Panc1 (cell line): ENCODE measurements at regions of chr2 and their contacts with region 1.

Region 1: GRCh38 chr2:9191041-9191481 is 15.6 kb upstream of the ASAP2 start:
- DNase-seq: no peak
- ATAC-seq: peak; percentile 87
- H3K4me3 ChIP-seq: no peak overlapping the region
- H3K27ac ChIP-seq: peak overlapping the region; percentile 51; the same call in 1 of the 2 replicates
- H3K4me1 ChIP-seq: peaks cover 10% of the 10 kb centered on the region; the same call in 1 of the 2 replicates
- H3K27me3 ChIP-seq: no peaks in the 10 kb centered on the region
- CTCF ChIP-seq: no peak

Region 2: DNA sequence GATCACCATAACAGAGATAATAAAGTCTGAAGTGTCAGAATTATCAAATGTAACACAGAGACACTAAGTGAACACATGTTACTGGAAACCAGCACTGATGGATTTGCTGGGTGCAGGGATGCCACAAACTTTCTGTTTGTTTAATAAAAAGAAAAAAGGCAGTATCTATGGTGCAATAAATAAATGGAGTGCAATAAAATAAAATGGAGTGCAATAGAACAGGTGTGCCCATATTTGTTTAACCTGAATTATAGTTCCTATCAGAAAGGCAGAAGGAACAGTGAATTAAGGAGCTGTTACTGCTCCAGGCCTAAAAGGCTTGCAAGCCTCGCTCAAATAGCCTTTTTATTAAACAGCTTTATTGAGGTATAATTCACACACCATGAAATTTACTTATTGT is 272.6 kb before region 1 on chr2:
- CTCF ChIA-PET with region 1: no interaction called
- POLR2A ChIA-PET with region 1: interaction called, 11 read pairs
- in situ Hi-C with region 1: no loop called
- intact Hi-C with region 1: no loop called
- DNase-seq: no peak
- ATAC-seq: no peak
- H3K4me3 ChIP-seq: no peak overlapping the region
- H3K27ac ChIP-seq: no peak overlapping the region
- H3K4me1 ChIP-seq: no peaks in the 10 kb centered on the region; the same call in 1 of the 2 replicates
- H3K27me3 ChIP-seq: no peaks in the 10 kb centered on the region
- CTCF ChIP-seq: no peak

Region 3: GRCh38 chr2:9156483-9156882 is 34.6 kb before region 1 on chr2:
- CTCF ChIA-PET with region 1: no interaction called
- POLR2A ChIA-PET with region 1: no interaction called
- in situ Hi-C with region 1: no loop called
- intact Hi-C with region 1: no loop called
- DNase-seq: no peak
- ATAC-seq: no peak
- H3K4me3 ChIP-seq: no peak overlapping the region
- H3K27ac ChIP-seq: no peak overlapping the region
- H3K4me1 ChIP-seq: no peaks in the 10 kb centered on the region
- H3K27me3 ChIP-seq: no peaks in the 10 kb centered on the region
- CTCF ChIP-seq: no peak